ENCODE measurements at regions of chr3 and their contacts with region 1.

Region 1: DNA sequence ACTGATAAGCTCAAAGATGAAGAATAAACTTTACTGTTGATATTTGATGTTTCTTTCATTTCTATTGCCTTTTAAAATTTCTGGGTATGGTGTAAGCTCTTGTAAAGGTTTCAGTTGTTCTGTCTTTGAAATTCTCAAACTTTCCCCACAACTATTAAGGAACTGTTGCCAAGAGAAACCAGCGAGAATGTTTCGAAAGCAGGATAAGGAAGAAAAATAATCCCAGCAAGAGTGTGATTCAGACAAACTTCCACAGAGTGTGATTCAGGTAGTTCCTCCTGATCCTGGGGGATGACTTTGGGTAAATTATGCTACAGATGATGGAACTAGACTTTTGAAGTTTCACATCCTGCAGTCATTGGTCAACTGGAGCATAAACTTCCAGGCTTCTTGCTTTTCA is 632.0 kb downstream of the NSUN3 start:
- DNase-seq: no peak
- H3K4me3 ChIP-seq: no peak overlapping the region
- H3K27ac ChIP-seq: no peak overlapping the region
- H3K4me1 ChIP-seq: no peaks in the 10 kb centered on the region
- H3K27me3 ChIP-seq: no peaks in the 10 kb centered on the region
- CTCF ChIP-seq: no peak
- POLR2A ChIP-seq: no peak

Region 2: GRCh38 chr3:94137377-94137776 is 557.5 kb before region 1 on chr3:
- CTCF ChIA-PET with region 1: no interaction called
- POLR2A ChIA-PET with region 1: no interaction called
- dilution Hi-C with region 1: no loop called
- intact Hi-C with region 1: no loop called
- DNase-seq: no peak
- H3K4me3 ChIP-seq: no peak overlapping the region
- H3K27ac ChIP-seq: no peak overlapping the region
- H3K4me1 ChIP-seq: no peaks in the 10 kb centered on the region
- H3K27me3 ChIP-seq: no peaks in the 10 kb centered on the region
- CTCF ChIP-seq: no peak
- POLR2A ChIP-seq: no peak

Region 3: GRCh38 chr3:94472511-94472910 is 222.4 kb before region 1 on chr3:
- CTCF ChIA-PET with region 1: no interaction called
- POLR2A ChIA-PET with region 1: no interaction called
- dilution Hi-C with region 1: no loop called
- intact Hi-C with region 1: no loop called
- DNase-seq: no peak
- H3K4me3 ChIP-seq: no peak overlapping the region
- H3K27ac ChIP-seq: no peak overlapping the region
- H3K4me1 ChIP-seq: no peaks in the 10 kb centered on the region
- H3K27me3 ChIP-seq: no peaks in the 10 kb centered on the region
- CTCF ChIP-seq: no peak
- POLR2A ChIP-seq: no peak

Region 4: DNA sequence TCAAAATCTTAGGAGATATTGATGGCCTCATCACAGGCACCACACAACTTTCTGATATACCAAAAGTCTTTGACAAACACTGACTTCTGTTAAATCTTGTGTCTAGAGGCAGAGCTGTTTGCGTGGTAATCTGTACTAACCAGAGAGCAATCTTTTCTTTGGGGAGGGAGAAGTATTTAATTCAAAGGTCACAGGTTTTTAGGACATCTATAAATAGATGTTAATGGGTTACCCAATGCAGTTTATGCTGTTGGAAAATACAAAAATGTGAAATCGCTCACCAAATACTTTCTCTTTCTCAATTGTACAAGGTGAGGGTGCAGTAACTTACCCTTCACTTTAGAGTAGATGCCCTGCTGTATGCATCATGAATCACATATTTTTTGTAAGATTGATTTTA is 121.6 kb before region 1 on chr3:
- CTCF ChIA-PET with region 1: no interaction called
- POLR2A ChIA-PET with region 1: no interaction called
- dilution Hi-C with region 1: no loop called
- intact Hi-C with region 1: no loop called
- DNase-seq: no peak
- H3K4me3 ChIP-seq: no peak overlapping the region
- H3K27ac ChIP-seq: no peak overlapping the region
- H3K4me1 ChIP-seq: no peaks in the 10 kb centered on the region
- H3K27me3 ChIP-seq: no peaks in the 10 kb centered on the region
- CTCF ChIP-seq: no peak
- POLR2A ChIP-seq: no peak

Region 5: DNA sequence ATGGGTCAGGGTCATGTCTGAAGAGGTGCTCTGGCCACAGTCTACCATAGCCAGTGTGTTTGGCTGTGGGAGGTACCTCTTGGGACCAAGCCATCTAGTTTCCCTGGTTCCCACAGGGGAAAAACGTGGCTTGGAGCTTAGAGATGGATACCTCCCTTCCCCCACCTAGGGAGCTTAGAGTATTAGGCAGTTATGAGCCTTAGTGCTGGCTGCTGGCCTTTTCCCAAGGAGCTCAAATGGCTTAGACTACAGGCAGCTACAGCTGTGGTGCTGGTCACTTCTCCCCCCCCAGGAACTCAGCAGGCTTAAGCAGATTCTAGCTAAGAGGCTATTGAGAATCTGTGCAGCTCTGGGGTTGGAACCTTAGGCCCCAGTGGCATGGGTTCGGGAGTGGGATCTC is 40.8 kb before region 1 on chr3:
- CTCF ChIA-PET with region 1: no interaction called
- POLR2A ChIA-PET with region 1: no interaction called
- dilution Hi-C with region 1: no loop called
- intact Hi-C with region 1: loop called (anchors 2 kb)
- DNase-seq: no peak
- H3K4me3 ChIP-seq: no peak overlapping the region
- H3K27ac ChIP-seq: no peak overlapping the region
- H3K4me1 ChIP-seq: no peaks in the 10 kb centered on the region
- H3K27me3 ChIP-seq: no peaks in the 10 kb centered on the region
- CTCF ChIP-seq: no peak
- POLR2A ChIP-seq: no peak